GM18951 (cell line): ENCODE measurements at regions of chr2 and their contacts with region 1.

Region 1: DNA sequence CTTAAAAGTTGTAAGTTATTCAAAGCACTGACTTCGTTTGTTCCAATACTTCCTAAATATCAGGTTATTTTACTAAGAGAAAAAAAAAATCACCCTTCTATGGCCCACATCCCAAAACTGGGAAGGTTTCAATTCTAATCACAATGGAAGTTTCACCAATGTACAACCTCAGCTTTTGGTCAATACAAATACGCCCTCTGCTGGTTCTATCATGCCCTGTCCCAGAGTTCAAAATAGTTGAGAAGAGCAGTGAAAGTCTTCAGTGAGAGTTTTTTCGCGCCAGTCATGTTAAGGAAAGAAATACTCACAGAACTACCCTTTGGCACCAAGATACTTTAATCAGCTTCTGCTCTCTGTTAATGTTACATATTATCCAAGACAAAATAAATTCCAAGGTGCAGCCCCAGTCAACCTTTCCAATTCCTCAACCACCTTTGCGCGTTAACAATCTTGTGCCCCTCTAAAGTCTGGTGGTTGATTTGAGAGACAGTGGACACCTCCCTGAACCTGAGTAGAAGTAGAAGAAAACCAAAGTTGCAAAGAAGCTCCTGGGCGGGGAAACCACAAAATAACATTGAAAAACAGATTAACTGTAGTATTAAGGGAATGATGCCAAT is 59.9 kb downstream of the SUMO1 start:
- POLR2A ChIP-seq: no peak

Region 2: GRCh38 chr2:201860636-201861066 is 317.8 kb before region 1 on chr2:
- in situ Hi-C with region 1: loop called (anchors 25 kb)
- POLR2A ChIP-seq: no peak

Region 3: DNA sequence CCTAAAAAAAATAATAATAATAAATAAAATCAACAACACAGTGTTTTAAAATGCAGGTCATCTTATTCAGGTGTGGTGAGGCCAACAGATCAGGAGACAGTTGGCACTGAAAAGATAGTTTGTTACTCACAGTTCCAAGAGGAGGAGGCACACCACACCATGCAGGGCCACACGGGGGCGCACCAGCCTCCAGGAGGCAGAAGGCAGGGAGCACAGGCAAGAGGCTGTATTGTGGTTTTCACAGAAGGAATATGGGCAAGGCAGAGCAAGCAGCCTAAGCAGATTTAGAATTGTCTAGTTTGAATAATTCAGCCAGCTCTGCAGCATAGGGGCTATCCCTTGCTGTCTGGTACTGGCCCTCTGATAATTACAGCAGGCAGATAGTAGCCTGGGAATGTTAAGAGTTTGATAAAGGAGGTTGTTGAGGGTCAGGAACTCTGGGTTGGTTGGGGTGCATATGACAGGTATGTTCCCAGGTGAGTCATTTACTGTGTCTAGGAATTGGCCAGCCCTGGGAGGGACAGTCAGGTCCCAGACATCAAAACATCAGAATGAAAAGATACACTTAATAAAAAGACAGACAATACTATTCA is 74.1 kb before region 1 on chr2:
- in situ Hi-C with region 1: loop called (anchors 10 kb)
- POLR2A ChIP-seq: no peak